ENCODE measurements at regions of chr2 and their contacts with region 1.

Region 1: DNA sequence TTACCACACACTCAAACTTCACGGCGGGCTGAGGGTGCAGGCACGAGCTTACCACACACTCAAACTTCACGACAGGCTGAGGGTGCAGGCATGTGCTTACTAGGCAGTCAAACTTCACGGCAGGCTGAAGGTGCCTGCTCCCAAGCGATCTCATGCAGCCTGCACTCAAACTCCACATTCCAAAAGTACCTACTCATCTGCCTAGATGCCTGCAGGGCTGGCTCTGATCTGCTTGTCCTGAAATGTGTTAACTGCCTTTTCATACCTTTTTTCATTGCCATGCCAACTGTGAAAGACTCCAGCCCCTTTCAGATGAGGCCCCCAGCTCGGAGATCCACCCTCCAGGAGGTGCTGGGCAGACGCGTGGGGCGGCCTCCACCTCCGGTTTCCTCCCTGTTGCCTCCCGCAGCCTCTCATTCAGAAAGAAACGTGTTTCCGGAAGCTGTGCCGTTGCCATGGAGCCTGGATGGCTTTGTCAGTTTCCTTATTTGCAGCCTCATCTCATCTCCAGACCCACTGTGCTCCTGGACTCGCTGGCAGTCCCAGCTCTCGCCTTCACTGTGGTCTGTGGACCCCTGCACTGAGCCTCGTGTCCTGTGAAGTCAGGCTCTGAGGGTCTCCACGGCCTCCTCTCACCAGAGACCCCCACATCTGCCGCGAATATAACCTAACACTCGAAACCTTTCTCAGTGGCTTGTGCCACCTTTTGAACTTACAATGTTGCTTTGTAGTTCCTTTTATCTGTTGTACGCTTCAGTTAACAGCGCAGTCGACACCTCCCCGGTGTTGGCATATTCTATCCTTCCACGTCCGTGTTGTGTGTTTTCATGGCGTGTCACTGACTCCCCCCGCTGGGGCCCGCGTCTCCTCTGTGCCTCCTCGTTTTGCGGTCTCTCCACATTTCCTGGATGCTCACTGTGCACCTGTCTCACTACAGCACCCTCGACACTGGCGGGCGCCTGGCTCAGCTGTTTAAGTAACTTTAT is 106.1 kb upstream of the ALKAL2 start:
- DNase-seq: peak; percentile 68
- H3K4me3 Mint-ChIP-seq: peak overlapping the region; percentile 67
- H3K27ac Mint-ChIP-seq: peak overlapping the region; percentile 72
- H3K4me1 Mint-ChIP-seq: peaks cover 25% of the 10 kb centered on the region
- H3K27me3 Mint-ChIP-seq: no peaks in the 10 kb centered on the region

Region 2: GRCh38 chr2:429575-430254 is 35.7 kb after region 1 on chr2:
- intact Hi-C with region 1: loop called (anchors 5 kb)
- DNase-seq: peak; percentile 26
- H3K4me3 Mint-ChIP-seq: peak overlapping the region; percentile 37
- H3K27ac Mint-ChIP-seq: peak overlapping the region; percentile 78
- H3K4me1 Mint-ChIP-seq: peaks cover 29% of the 10 kb centered on the region
- H3K27me3 Mint-ChIP-seq: peaks cover 5% of the 10 kb centered on the region